Tibial artery (tissue), 4 donors: ENCODE measurements at regions of chr17 and their contacts with region 1.

Region 1: GRCh38 chr17:28193241-28193640 is 125.8 kb upstream of the TMEM97 start:
- DNase-seq: peak; percentile 65 to 69
- H3K4me3 ChIP-seq: no peak overlapping the region
- H3K27ac ChIP-seq: no peak overlapping the region
- H3K4me1 ChIP-seq: no peaks in the 10 kb centered on the region
- H3K27me3 ChIP-seq: no peaks in the 10 kb centered on the region
- CTCF ChIP-seq: no peak

Region 2: DNA sequence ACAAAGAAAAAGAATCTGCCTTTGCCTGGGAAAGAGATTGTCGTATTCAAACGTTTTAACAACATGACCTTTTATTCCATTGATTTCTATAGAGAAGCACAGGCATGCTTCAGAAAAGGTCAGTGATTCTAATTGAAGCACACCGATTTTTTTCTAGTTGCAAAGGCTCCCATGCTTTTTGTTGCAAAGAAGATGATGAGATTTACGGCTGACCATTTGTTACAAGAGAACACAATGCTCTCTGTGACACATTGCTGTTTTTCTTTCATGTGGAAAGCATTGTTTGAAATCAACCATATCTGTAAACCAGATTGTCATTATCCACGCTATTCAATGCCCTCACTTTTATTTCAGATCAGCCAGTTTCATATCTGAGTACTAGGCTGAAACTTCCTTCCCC is 50.9 kb before region 1 on chr17:
- intact Hi-C with region 1: loop called (anchors 5 kb)
- DNase-seq: no peak
- H3K4me3 ChIP-seq: no peak overlapping the region
- H3K27ac ChIP-seq: no peak overlapping the region
- H3K4me1 ChIP-seq: no peaks in the 10 kb centered on the region
- H3K27me3 ChIP-seq: no peaks in the 10 kb centered on the region
- CTCF ChIP-seq: no peak

Region 3: DNA sequence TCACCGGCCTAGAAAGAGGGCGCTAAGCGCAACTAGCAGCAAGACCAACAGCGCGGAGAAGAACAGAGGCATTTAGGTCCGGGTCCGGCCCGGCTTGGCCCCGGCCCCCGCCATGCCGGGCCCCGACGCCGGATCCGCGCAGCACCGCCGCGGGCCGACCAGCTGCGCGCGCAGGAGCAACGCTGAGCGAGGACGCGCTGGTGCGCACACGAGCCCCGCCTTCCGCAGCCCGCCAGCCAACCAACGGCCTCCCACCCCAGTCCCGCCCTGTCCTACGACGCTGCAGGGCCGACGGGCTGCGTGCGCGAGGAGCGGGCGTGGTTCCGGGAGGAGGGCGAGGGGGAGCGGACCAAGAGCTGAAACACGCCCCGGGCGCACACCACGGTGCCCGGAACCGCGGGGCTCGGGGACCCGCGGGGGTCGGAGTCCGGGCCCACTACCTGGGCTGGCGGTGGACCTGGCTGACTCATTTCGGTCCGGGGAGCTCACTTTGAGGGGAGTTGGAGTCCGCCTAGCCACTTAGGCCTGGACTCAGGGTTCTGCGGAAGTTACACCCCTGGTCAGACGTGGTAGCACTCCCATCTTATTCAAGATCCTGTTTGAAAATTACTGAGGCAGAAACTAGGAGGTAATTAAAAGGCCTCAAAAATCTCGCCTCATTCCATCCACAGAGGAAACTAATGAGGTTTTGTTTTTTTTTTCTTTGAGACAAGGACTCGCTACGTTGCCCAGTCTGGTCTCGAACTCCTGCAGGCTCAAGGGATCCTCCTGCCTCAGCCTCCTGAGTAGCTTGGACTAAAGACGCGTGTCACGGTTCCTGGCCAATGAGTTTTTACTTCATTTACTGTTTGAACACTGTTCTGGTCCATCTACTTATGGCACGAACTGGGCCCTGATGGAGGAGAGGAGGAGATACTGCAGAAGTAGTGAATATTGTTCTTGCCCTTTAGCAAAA is 452.0 kb after region 1 on chr17 and contains the start of gene BLTP2:
- intact Hi-C with region 1: no loop called
- DNase-seq: peak; percentile 94 to 98
- H3K4me3 ChIP-seq: peak within 1 kb of the TSS; percentile 95 to 98
- H3K27ac ChIP-seq: peak within 1 kb of the TSS; percentile 88 to 93
- H3K4me1 ChIP-seq: peaks cover 7 to 39% (median 25%) of the 10 kb centered on the region in 4 donors
- H3K27me3 ChIP-seq: no peaks in the 10 kb centered on the region
- CTCF ChIP-seq: peak in 1 of 2 experiments; percentile 46